ENCODE measurements at regions of chr12 and their contacts with region 1.

Region 1: GRCh38 chr12:12467688-12468261 is 94.9 kb downstream of the DUSP16 start:
- DNase-seq: peak in 11 of 14 experiments; percentile 15 to 87 (median 51)
- ATAC-seq: peak; percentile 23
- H3K4me3 ChIP-seq: no peak overlapping the region
- H3K4me3 Mint-ChIP-seq: peak overlapping the region; percentile 40
- H3K27ac ChIP-seq: peak overlapping the region; percentile 78 to 81
- H3K27ac Mint-ChIP-seq: peak overlapping the region; percentile 98
- H3K4me1 ChIP-seq: peaks cover 69% of the 10 kb centered on the region
- H3K4me1 Mint-ChIP-seq: peaks cover 79% of the 10 kb centered on the region
- H3K27me3 ChIP-seq: no peaks in the 10 kb centered on the region
- H3K27me3 Mint-ChIP-seq: no peaks in the 10 kb centered on the region
- CTCF ChIP-seq: no peak

Region 2: DNA sequence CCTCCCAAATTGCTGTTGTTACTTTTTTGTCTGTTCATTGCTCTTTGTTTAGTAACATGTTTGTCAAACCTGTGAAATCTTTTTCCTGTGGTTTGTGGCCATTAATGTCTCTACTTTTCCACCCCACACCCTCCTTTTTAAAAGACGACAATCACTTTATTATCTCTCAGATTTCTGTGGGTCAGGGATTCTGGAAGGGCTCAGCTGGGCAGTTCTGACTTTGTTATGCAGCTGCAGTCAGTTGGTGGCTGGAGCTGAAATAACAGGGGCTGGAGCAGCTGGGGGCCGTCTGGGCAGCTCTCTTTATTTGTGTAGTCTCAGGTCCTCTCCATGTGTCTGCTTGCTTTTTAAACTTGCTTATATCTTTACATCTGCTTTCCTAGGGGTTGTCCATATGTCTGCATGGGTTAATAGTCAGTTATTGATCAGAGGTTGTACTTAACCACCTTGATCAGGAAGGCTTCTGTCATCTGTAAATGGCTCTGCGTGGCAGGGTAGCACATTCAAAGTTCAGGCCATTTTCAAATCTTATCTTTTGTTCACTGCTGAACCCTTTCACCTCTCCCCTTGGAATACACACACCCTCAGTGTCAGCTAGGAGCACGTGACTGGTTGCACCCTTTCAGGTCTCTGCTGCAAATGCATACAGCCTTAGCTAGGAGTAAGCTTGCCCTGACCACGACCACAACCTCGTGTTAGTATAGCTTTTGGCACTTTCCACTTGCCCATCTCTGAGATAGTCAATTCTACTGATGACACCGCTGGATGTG is 83.0 kb before region 1 on chr12:
- CTCF ChIA-PET with region 1: no interaction called
- POLR2A ChIA-PET with region 1: interaction called, 18 read pairs
- intact Hi-C with region 1: no loop called
- DNase-seq: peak in 5 of 14 experiments; percentile 17 to 70 (median 32)
- ATAC-seq: peak; percentile 19
- H3K4me3 ChIP-seq: no peak overlapping the region
- H3K4me3 Mint-ChIP-seq: peak overlapping the region; percentile 56
- H3K27ac ChIP-seq: peak overlapping the region in 1 of 2 donors; percentile 65
- H3K27ac Mint-ChIP-seq: peak overlapping the region; percentile 79
- H3K4me1 ChIP-seq: peaks cover 15% of the 10 kb centered on the region
- H3K4me1 Mint-ChIP-seq: peaks cover 61% of the 10 kb centered on the region
- H3K27me3 ChIP-seq: no peaks in the 10 kb centered on the region
- H3K27me3 Mint-ChIP-seq: no peaks in the 10 kb centered on the region
- CTCF ChIP-seq: no peak

Region 3: DNA sequence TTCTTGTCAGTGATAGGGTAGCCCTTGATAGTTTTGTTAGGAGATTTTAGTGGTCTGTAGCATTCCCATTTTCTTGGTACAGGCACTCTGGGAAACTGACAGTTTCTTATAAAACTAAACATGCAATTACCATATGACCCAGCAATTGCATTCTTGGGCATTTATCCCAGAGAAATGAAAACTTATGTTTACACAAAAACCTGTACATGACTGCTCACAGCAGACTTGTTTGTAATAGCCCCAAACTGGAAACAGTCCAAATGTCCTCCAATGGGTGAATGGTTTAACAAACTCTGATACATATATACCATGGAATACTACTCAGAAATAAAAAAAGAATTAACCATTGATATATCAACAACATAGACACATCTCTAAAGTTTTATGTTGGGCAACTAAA is 35.4 kb before region 1 on chr12:
- CTCF ChIA-PET with region 1: no interaction called
- POLR2A ChIA-PET with region 1: interaction called, 6 read pairs
- intact Hi-C with region 1: loop called in 1 of 2 experiments (anchors 5 kb)
- DNase-seq: no peak
- ATAC-seq: no peak
- H3K4me3 ChIP-seq: no peak overlapping the region
- H3K4me3 Mint-ChIP-seq: no peak overlapping the region
- H3K27ac ChIP-seq: no peak overlapping the region
- H3K27ac Mint-ChIP-seq: peak overlapping the region; percentile 68
- H3K4me1 ChIP-seq: peaks cover 30% of the 10 kb centered on the region
- H3K4me1 Mint-ChIP-seq: peaks cover 74% of the 10 kb centered on the region
- H3K27me3 ChIP-seq: no peaks in the 10 kb centered on the region
- H3K27me3 Mint-ChIP-seq: no peaks in the 10 kb centered on the region
- CTCF ChIP-seq: no peak

Region 4: GRCh38 chr12:12442548-12443071 is 25.2 kb before region 1 on chr12:
- CTCF ChIA-PET with region 1: interaction called, 7 read pairs
- POLR2A ChIA-PET with region 1: interaction called, 86 read pairs
- intact Hi-C with region 1: loop called in 1 of 2 experiments (anchors 1 kb)
- DNase-seq: peak in 3 of 14 experiments; percentile 47 to 52 (median 52)
- ATAC-seq: peak; percentile 1
- H3K4me3 ChIP-seq: no peak overlapping the region
- H3K4me3 Mint-ChIP-seq: peak overlapping the region; percentile 45
- H3K27ac ChIP-seq: peak overlapping the region; percentile 83
- H3K27ac Mint-ChIP-seq: peak overlapping the region; percentile 95
- H3K4me1 ChIP-seq: peaks cover 74% of the 10 kb centered on the region
- H3K4me1 Mint-ChIP-seq: peaks cover 81% of the 10 kb centered on the region
- H3K27me3 ChIP-seq: no peaks in the 10 kb centered on the region
- H3K27me3 Mint-ChIP-seq: no peaks in the 10 kb centered on the region
- CTCF ChIP-seq: no peak

Region 5: DNA sequence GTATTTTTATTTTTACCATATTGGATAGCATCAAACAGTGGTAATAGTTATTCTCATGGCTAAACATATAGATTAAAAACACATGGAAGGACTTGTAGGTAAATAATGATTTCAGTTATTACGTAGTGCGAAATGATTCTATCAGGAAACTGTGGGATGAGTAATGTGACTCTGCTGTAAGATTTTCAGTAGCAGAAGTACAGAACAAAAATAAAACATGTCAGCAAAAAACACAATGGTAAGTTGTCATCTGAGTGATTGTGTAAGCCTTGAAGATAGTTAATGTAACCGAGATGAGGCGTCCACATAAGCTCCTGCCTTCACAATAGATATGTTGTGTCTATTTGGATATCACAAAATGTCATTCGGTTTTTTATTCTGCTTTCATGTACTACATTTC is 11.1 kb before region 1 on chr12:
- CTCF ChIA-PET with region 1: interaction called, 7 read pairs
- POLR2A ChIA-PET with region 1: interaction called, 49 read pairs
- intact Hi-C with region 1: no loop called
- DNase-seq: peak in 3 of 14 experiments; percentile 61 to 67 (median 63)
- ATAC-seq: peak; percentile 74
- H3K4me3 ChIP-seq: peak overlapping the region; percentile 29
- H3K4me3 Mint-ChIP-seq: peak overlapping the region; percentile 68
- H3K27ac ChIP-seq: peak overlapping the region in 1 of 2 donors; percentile 68
- H3K27ac Mint-ChIP-seq: peak overlapping the region; percentile 85
- H3K4me1 ChIP-seq: peaks cover 18% of the 10 kb centered on the region
- H3K4me1 Mint-ChIP-seq: peaks cover 42% of the 10 kb centered on the region
- H3K27me3 ChIP-seq: no peaks in the 10 kb centered on the region
- H3K27me3 Mint-ChIP-seq: no peaks in the 10 kb centered on the region
- CTCF ChIP-seq: no peak

Region 6: GRCh38 chr12:12582895-12583303 is 115.1 kb after region 1 on chr12:
- CTCF ChIA-PET with region 1: no interaction called
- POLR2A ChIA-PET with region 1: no interaction called
- intact Hi-C with region 1: no loop called
- DNase-seq: no peak
- ATAC-seq: peak; percentile 34
- H3K4me3 ChIP-seq: no peak overlapping the region
- H3K4me3 Mint-ChIP-seq: no peak overlapping the region
- H3K27ac ChIP-seq: no peak overlapping the region
- H3K27ac Mint-ChIP-seq: no peak overlapping the region
- H3K4me1 ChIP-seq: peaks cover 8% of the 10 kb centered on the region
- H3K4me1 Mint-ChIP-seq: peaks cover 15% of the 10 kb centered on the region
- H3K27me3 ChIP-seq: no peaks in the 10 kb centered on the region
- H3K27me3 Mint-ChIP-seq: no peaks in the 10 kb centered on the region
- CTCF ChIP-seq: no peak

Region 7: DNA sequence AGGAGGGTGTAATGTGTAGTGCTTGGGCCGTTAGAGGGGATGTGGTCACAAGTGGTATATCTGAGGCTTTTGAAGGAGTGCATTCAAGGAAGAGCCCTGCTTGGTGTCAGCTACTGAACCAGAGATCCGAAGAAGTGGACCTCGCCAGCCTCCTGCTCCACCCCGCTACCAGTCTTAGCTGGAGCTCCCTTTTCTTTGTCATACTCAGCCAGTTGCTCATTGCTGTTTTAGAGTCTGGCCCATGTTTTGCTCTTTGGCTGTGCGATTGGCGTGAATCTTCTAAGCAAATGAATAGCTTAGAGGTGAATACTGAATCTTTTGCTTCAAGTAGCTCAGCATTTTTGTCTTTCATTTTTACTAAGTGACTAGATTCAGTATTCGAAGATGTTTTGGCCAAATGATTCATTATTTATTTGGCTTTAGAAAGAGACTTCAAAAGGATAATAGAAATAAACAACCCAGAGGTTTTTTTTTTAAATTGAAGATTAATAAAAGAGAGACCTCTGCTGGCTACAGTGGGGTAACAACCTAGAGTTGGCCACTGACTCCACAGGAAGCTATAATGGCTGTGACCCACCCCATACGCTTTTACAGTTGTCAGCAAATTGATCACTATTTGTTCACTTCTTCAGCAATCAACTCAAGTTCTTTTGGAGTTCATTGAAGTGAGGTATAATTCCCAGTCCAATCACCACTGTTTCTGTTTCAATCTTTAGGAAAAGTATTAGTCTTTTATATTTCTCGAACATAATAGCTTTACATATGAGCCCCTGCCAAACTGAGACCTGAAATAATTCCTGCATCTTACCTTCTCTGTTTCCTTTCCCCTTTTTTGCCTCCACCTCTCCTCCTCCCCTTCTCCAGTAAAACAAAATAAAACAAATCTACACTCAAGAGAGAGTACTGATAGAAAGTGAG is 269.2 kb after region 1 on chr12:
- CTCF ChIA-PET with region 1: no interaction called
- POLR2A ChIA-PET with region 1: interaction called, 10 read pairs
- intact Hi-C with region 1: no loop called
- DNase-seq: peak in 13 of 14 experiments; percentile 15 to 87 (median 33)
- ATAC-seq: peak; percentile 82
- H3K4me3 ChIP-seq: peak overlapping the region; percentile 34
- H3K4me3 Mint-ChIP-seq: peak overlapping the region; percentile 58
- H3K27ac ChIP-seq: peak overlapping the region; percentile 34 to 40
- H3K27ac Mint-ChIP-seq: peak overlapping the region; percentile 85
- H3K4me1 ChIP-seq: peaks cover 30% of the 10 kb centered on the region
- H3K4me1 Mint-ChIP-seq: peaks cover 41% of the 10 kb centered on the region
- H3K27me3 ChIP-seq: no peaks in the 10 kb centered on the region
- H3K27me3 Mint-ChIP-seq: no peaks in the 10 kb centered on the region
- CTCF ChIP-seq: peak; percentile 71

Measured in CD4-positive, alpha-beta T cell (primary cell).